Left ventricle myocardium superior (tissue), 1 donor: ENCODE measurements at regions of chr9 and their contacts with region 1.

Region 1: GRCh38 chr9:84647699-84648098 is 21.8 kb upstream of the NTRK2 start:
- DNase-seq: no peak
- ATAC-seq: peak; percentile 48

Region 2: DNA sequence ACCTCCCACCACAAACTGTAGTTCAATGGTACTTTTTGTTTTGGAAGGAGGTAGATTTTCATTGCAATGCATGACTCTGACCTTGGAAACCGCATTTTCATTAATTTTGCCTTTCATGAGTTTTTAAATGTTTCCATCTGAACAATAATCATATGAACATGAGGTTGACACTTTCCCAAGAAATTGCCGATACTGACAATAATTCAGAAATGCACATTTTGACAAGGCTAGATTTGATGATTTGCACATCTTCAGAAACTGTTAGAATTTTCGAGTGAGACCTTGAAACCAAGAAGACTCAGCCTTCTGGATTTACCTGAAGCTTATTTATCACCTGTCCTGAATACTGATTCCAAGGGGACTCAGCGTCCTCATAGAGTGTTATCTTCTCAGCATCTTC is 72.0 kb before region 1 on chr9:
- intact Hi-C with region 1: loop called (anchors 2 kb)
- DNase-seq: no peak
- ATAC-seq: no peak